ENCODE measurements at regions of chr17 and their contacts with region 1.

Region 1: DNA sequence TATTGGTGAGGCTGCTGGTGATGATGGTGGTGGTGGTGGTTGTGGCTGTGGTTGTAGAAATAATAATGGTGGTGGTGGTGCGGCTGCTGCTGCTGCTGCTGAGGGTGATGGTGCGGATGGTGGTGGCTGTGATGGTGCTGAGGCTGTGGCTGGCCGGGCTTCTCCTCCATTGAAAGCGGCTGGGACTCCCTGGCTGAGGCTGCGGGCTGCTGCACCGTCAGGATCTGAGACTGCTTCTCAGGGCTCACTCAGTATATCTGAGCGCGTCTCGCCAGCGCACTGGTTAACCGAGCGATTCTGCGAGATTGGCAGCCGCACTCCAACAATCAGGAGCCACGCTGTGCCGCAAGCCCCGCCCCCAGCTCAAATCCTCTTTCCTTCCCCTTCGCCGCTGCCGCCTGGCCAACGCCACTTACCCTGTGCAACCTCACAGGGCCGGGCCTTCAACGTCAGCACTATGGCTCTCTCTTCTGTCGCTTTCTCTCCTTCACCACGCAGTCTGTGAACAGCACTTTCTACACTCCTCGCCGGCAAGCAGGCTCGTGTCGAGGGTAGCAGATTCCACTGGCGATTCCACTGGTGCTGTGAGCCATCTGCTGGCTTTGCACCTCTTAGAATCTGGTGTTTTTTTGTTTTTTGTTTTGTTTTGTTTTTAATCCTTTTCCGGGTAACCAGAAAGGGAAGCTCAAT is at the start of gene NUFIP2:
- DNase-seq: peak; percentile 99
- H3K4me3 ChIP-seq: peak within 1 kb of the TSS; percentile 70 to 95 (median 78)
- H3K27ac ChIP-seq: peak within 1 kb of the TSS; percentile 82
- H3K4me1 ChIP-seq: peaks cover 30% of the 10 kb centered on the region
- H3K27me3 ChIP-seq: no peaks in the 10 kb centered on the region
- CTCF ChIP-seq: no peak
- POLR2A ChIP-seq: peak; percentile 100
- total RNA-seq, gene NUFIP2: 51.1 and 60.7 TPM in 2 replicates

Region 2: GRCh38 chr17:29124117-29124924 is 169.7 kb before region 1 on chr17:
- CTCF ChIA-PET with region 1: interaction called, 93 read pairs
- POLR2A ChIA-PET with region 1: interaction called, 4 read pairs
- dilution Hi-C with region 1: no loop called
- intact Hi-C with region 1: no loop called
- DNase-seq: peak; percentile 61
- H3K4me3 ChIP-seq: no peak overlapping the region
- H3K27ac ChIP-seq: no peak overlapping the region
- H3K4me1 ChIP-seq: no peaks in the 10 kb centered on the region
- H3K27me3 ChIP-seq: no peaks in the 10 kb centered on the region
- CTCF ChIP-seq: peak; percentile 60 to 61
- POLR2A ChIP-seq: no peak

Region 3: GRCh38 chr17:29252101-29252866 is 41.8 kb before region 1 on chr17:
- CTCF ChIA-PET with region 1: interaction called, 35 read pairs
- POLR2A ChIA-PET with region 1: interaction called, 6 read pairs
- dilution Hi-C with region 1: no loop called
- intact Hi-C with region 1: loop called (anchors 5 kb)
- DNase-seq: peak; percentile 51
- H3K4me3 ChIP-seq: no peak overlapping the region
- H3K27ac ChIP-seq: no peak overlapping the region
- H3K4me1 ChIP-seq: peaks cover 24% of the 10 kb centered on the region
- H3K27me3 ChIP-seq: no peaks in the 10 kb centered on the region
- CTCF ChIP-seq: peak; percentile 37 to 42
- POLR2A ChIP-seq: no peak

Region 4: GRCh38 chr17:29273924-29274323 is 20.1 kb before region 1 on chr17:
- CTCF ChIA-PET with region 1: interaction called, 21 read pairs
- POLR2A ChIA-PET with region 1: no interaction called
- dilution Hi-C with region 1: no loop called
- intact Hi-C with region 1: no loop called
- DNase-seq: no peak
- H3K4me3 ChIP-seq: no peak overlapping the region
- H3K27ac ChIP-seq: no peak overlapping the region
- H3K4me1 ChIP-seq: no peaks in the 10 kb centered on the region
- H3K27me3 ChIP-seq: no peaks in the 10 kb centered on the region
- CTCF ChIP-seq: no peak
- POLR2A ChIP-seq: no peak

Region 5: GRCh38 chr17:29283271-29283895 is 10.7 kb before region 1 on chr17:
- CTCF ChIA-PET with region 1: interaction called, 44 read pairs
- POLR2A ChIA-PET with region 1: no interaction called
- dilution Hi-C with region 1: no loop called
- intact Hi-C with region 1: no loop called
- DNase-seq: no peak
- H3K4me3 ChIP-seq: no peak overlapping the region
- H3K27ac ChIP-seq: no peak overlapping the region
- H3K4me1 ChIP-seq: peaks cover 2% of the 10 kb centered on the region
- H3K27me3 ChIP-seq: no peaks in the 10 kb centered on the region
- CTCF ChIP-seq: no peak
- POLR2A ChIP-seq: no peak

Region 6: DNA sequence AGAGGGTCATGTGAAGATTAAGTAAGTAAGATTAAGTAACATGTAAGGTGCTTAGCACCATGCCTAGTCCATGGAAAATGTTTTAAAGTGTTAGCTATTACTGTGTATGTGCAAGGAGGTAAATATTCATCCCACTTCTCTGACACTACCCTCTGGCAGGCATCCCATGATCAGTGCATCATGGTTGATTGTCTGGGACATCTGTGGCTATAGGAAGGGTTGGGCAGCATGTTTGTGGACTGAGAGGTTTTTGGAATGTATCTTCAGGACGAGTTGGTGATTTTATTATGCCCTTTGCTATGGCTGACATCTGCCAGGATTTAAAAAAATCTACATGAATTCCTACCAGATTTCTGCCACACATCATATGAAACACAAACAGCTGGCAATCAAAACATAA is 89.7 kb after region 1 on chr17:
- CTCF ChIA-PET with region 1: no interaction called
- POLR2A ChIA-PET with region 1: no interaction called
- dilution Hi-C with region 1: no loop called
- intact Hi-C with region 1: no loop called
- DNase-seq: no peak
- H3K4me3 ChIP-seq: no peak overlapping the region
- H3K27ac ChIP-seq: no peak overlapping the region
- H3K4me1 ChIP-seq: peaks cover 6% of the 10 kb centered on the region
- H3K27me3 ChIP-seq: peaks cover 0 to 1% of the 10 kb centered on the region in 2 experiments
- CTCF ChIP-seq: no peak
- POLR2A ChIP-seq: no peak

Region 7: GRCh38 chr17:29475891-29476290 is 181.9 kb after region 1 on chr17:
- CTCF ChIA-PET with region 1: no interaction called
- POLR2A ChIA-PET with region 1: no interaction called
- dilution Hi-C with region 1: no loop called
- intact Hi-C with region 1: no loop called
- DNase-seq: no peak
- H3K4me3 ChIP-seq: no peak overlapping the region
- H3K27ac ChIP-seq: no peak overlapping the region
- H3K4me1 ChIP-seq: no peaks in the 10 kb centered on the region
- H3K27me3 ChIP-seq: no peaks in the 10 kb centered on the region
- CTCF ChIP-seq: no peak
- POLR2A ChIP-seq: no peak

Region 8: GRCh38 chr17:29568331-29569244 is 274.6 kb after region 1 on chr17 and contains the start of gene TP53I13:
- CTCF ChIA-PET with region 1: no interaction called
- POLR2A ChIA-PET with region 1: no interaction called
- dilution Hi-C with region 1: no loop called
- intact Hi-C with region 1: loop called (anchors 5 kb)
- DNase-seq: peak; percentile 82
- H3K4me3 ChIP-seq: peak within 1 kb of the TSS; percentile 46 to 77 (median 70)
- H3K27ac ChIP-seq: peak within 1 kb of the TSS; percentile 24
- H3K4me1 ChIP-seq: peaks cover 26% of the 10 kb centered on the region
- H3K27me3 ChIP-seq: no peaks in the 10 kb centered on the region
- CTCF ChIP-seq: no peak
- POLR2A ChIP-seq: peak; percentile 57
- total RNA-seq, gene TP53I13: 33.8 and 41.1 TPM in 2 replicates

Region 9: DNA sequence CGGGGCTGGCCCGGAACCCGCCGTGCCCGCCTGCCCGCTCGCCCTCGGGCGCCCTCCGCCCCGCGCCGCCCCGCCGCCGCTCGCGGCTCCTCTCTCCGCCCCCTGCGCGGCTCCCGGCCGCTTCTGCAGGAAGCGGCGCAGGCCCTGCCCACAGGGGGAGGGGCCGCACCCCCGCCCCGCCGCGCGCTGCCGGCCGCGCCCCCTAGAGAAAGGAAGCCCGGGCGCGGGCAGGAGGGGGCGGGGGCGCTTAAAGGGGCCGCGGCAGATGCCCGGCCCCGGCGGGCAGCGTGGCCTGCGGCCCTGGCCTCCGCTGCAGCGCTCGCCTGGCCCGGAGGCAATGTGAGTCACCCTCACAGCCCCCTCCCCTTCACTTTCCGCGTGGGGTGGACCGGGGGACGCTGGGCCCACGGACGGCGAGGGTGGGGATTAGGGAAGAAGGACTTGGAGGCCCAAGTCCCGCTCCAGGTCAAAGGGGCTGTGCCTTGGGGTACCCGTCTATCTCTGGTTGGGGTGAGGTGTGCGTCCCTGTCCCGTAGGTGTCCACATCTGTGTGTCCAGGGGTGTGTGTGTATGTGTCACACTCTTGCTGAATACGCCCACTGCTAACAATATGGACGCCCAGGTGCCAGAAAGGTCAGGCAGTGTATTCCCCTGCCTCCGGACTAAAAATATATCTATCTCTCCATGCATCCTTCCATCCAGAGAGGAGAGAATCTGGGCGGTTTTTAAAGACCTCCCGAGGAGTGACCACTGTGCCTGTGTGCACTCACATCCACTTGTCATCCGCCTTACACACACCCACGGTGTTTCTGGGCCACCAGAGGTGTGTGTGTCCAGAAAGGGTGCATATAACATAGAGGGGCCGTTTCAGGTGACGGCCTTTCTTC is 295.7 kb after region 1 on chr17 and contains the start of gene GIT1:
- CTCF ChIA-PET with region 1: interaction called, 6 read pairs
- POLR2A ChIA-PET with region 1: no interaction called
- dilution Hi-C with region 1: no loop called
- intact Hi-C with region 1: loop called (anchors 5 kb)
- DNase-seq: peak; percentile 82
- H3K4me3 ChIP-seq: peak within 1 kb of the TSS; percentile 58 to 69 (median 68)
- H3K27ac ChIP-seq: peak within 1 kb of the TSS; percentile 66
- H3K4me1 ChIP-seq: peaks cover 76% of the 10 kb centered on the region
- H3K27me3 ChIP-seq: no peaks in the 10 kb centered on the region
- CTCF ChIP-seq: no peak
- POLR2A ChIP-seq: peak; percentile 75
- total RNA-seq, gene GIT1: 82.0 and 92.5 TPM in 2 replicates

Measured in endothelial cell of umbilical vein (primary cell).